HEK293 (cell line): ENCODE measurements at regions of chr9 and their contacts with region 1.

Region 1: DNA sequence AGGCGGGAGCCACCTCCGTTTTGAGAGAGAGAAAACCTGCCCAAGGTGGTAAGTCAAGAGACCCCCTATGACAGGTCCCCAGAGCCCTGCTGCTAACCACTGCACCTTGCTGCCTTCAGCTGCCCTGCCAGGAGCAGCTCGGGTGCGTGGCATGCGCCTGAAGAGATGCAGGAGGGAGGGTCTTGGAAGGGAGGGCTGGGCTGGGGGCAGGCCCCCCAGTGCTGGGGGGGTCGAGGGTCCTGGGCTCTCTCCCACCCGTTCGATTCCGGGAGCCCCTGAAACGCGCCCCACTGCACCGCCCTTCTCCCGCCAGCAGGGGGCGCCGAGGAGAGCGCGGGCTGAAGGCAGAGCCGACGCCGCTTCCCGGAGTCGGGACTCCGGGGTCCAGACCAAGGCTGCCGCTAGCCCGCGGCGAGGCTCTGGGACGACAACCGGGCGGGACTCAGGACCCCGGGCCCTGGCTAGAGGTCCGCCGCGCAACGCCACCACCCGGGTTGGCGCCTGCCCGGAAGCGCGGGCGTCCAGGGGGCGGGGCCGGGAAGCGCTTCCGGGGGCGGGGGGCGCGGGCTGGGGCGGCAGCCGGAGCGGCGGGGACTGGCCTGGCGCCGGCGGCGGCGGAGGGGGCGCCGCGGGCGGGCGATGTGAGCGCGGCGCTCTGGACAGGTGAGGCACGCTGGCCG is at the start of gene ZBTB34:
- H3K4me3 ChIP-seq: peak within 1 kb of the TSS; percentile 92
- H3K27ac ChIP-seq: peak within 1 kb of the TSS; percentile 81
- H3K4me1 ChIP-seq: peaks cover 3% of the 10 kb centered on the region; the same call in 1 of the 2 replicates
- CTCF ChIP-seq: peak; percentile 95

Region 2: GRCh38 chr9:126844085-126844484 is 16.1 kb before region 1 on chr9:
- CTCF ChIA-PET with region 1: interaction called, 16 read pairs
- POLR2A ChIA-PET with region 1: interaction called, 6 read pairs
- H3K4me3 ChIP-seq: no peak overlapping the region
- H3K27ac ChIP-seq: no peak overlapping the region
- H3K4me1 ChIP-seq: no peaks in the 10 kb centered on the region
- CTCF ChIP-seq: no peak

Region 3: GRCh38 chr9:126849591-126850225 is 10.5 kb before region 1 on chr9:
- CTCF ChIA-PET with region 1: interaction called, 16 read pairs
- POLR2A ChIA-PET with region 1: interaction called, 6 read pairs
- H3K4me3 ChIP-seq: no peak overlapping the region
- H3K27ac ChIP-seq: no peak overlapping the region
- H3K4me1 ChIP-seq: no peaks in the 10 kb centered on the region
- CTCF ChIP-seq: no peak

Region 4: DNA sequence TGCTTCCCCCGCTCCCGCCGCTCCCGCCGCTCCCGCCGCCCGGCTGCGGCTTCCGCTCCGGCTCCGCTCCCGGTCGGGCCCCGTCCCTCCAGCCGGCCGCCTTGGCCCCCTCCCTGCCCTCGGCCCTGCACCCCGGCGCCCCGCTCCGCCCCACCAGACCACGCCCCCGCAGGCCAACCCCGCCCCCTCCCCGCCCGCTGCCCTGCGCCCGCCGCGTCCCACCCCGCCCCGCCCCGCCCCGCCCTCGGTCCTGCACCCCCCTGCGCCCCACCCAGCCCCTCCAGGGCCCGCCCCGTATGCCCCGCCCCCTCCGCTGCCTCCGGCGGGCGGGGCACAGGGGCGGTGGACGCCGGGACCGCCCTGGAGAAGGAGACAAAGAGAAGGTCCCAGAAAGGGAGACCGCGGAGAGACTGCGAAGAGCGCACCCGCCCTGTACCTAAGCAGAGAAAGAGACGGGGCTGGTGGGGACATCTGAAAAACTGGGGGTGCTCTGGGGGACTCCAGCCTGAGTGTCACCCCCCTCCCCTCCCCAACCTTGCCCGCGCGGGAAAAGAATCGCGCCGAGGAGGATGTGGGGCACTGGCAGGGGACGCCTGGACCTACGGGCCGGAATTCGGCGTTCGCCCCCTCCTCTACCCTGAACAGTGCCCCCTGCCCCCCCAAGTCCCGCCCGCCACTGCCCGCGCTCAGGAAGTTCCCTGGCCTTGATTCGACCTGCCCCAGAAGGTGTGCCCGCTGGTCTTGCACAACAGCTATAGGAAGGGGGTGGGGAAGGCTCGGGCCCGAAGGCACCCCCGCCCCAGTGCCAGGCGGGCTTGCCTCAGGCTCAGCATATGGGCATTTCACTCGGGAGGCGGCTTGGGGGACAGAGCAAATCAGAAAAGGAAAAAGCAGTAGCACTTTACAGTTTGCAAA is 709.0 kb after region 1 on chr9:
- CTCF ChIA-PET with region 1: no interaction called
- POLR2A ChIA-PET with region 1: no interaction called
- H3K4me3 ChIP-seq: peak overlapping the region; percentile 54
- H3K27ac ChIP-seq: peak overlapping the region; percentile 68; the same call in 1 of the 2 replicates
- H3K4me1 ChIP-seq: peaks cover 9% of the 10 kb centered on the region; the same call in 1 of the 2 replicates
- CTCF ChIP-seq: no peak